Natural killer cell (primary cell): ENCODE measurements at regions of chr16 and their contacts with region 1.

Region 1: DNA sequence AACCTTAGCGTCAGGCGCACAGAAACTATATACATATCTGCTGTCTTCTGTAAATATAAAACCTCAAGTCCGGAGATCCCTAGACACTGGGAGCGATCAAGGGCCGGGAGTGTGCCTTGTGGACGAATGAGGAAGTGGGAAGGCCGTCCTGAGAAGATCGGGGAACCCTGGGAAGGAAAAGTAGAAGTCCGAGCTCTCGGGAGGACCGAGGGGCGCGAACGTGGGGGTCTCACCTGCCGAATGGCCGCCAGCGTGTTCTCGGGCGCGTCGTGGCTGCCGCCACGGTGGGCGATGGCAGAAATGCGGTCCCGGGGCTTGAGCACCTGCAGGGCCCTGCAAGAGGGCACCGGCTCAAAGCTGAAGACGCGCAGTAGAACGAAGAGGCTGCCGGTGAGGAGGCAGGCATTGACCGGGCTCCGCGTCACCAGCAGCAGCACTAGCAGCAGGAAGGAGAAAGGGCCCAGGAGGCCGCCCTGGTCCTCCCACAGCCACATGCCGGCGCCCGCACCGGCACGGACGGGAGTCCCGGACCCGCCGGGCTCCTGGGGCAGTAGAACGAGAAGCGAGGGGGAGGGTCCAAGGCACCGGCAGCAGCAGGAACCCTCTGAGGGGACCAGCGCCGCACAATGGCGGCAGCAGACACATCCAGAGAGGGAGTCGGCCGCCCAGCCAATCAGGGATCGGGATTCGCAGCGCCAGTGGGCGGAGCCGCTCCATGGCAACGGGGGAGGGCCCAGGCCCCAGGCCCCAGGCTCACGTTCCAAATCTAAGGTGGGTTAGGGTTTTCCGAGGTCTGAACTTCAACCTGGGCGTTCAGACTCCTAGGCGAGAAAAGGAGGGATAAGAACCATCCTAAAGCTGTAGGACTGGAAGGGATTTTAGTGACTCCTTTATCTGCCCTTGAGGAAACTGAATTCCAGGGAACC is at the start of gene GDE1:
- DNase-seq: peak; percentile 84 to 94
- ATAC-seq: peak; percentile 73 to 85 (median 76)
- H3K4me3 ChIP-seq: peak within 1 kb of the TSS; percentile 79
- H3K4me3 Mint-ChIP-seq: peak within 1 kb of the TSS; percentile 98
- H3K27ac ChIP-seq: peak within 1 kb of the TSS; percentile 77
- H3K27ac Mint-ChIP-seq: peak within 1 kb of the TSS; percentile 92 to 94
- H3K4me1 ChIP-seq: peaks cover 33% of the 10 kb centered on the region
- H3K4me1 Mint-ChIP-seq: peaks cover 64 to 72% of the 10 kb centered on the region in 2 donors
- H3K27me3 ChIP-seq: no peaks in the 10 kb centered on the region
- H3K27me3 Mint-ChIP-seq: no peaks in the 10 kb centered on the region
- CTCF ChIP-seq: no peak
- total RNA-seq, gene GDE1: 35.5 to 40.4 (median 35.9) TPM

Region 2: GRCh38 chr16:19502395-19503131 is 19.2 kb before region 1 on chr16:
- intact Hi-C with region 1: loop called (anchors 2 kb)
- DNase-seq: peak; percentile 36 to 80
- ATAC-seq: peak; percentile 53 to 64 (median 58)
- H3K4me3 ChIP-seq: no peak overlapping the region
- H3K4me3 Mint-ChIP-seq: no peak overlapping the region
- H3K27ac ChIP-seq: no peak overlapping the region
- H3K27ac Mint-ChIP-seq: no peak overlapping the region
- H3K4me1 ChIP-seq: no peaks in the 10 kb centered on the region
- H3K4me1 Mint-ChIP-seq: peaks cover 0 to 6% of the 10 kb centered on the region in 2 donors
- H3K27me3 ChIP-seq: no peaks in the 10 kb centered on the region
- H3K27me3 Mint-ChIP-seq: no peaks in the 10 kb centered on the region
- CTCF ChIP-seq: peak; percentile 68

Region 3: GRCh38 chr16:19645557-19645981 is 123.8 kb after region 1 on chr16:
- intact Hi-C with region 1: no loop called
- DNase-seq: no peak
- ATAC-seq: no peak
- H3K4me3 ChIP-seq: no peak overlapping the region
- H3K4me3 Mint-ChIP-seq: no peak overlapping the region
- H3K27ac ChIP-seq: no peak overlapping the region
- H3K27ac Mint-ChIP-seq: no peak overlapping the region
- H3K4me1 ChIP-seq: peaks cover 5% of the 10 kb centered on the region
- H3K4me1 Mint-ChIP-seq: no peaks in the 10 kb centered on the region
- H3K27me3 ChIP-seq: no peaks in the 10 kb centered on the region
- H3K27me3 Mint-ChIP-seq: no peaks in the 10 kb centered on the region
- CTCF ChIP-seq: no peak